ENCODE measurements at regions of chr5 and their contacts with region 1.

Region 1: GRCh38 chr5:31860726-31861433 is 221.9 kb downstream of the PDZD2 start:
- DNase-seq: no peak

Region 2: GRCh38 chr5:31346896-31347551 is 513.9 kb before region 1 on chr5:
- intact Hi-C with region 1: loop called in 1 of 2 experiments (anchors 5 kb)
- DNase-seq: no peak

Region 3: DNA sequence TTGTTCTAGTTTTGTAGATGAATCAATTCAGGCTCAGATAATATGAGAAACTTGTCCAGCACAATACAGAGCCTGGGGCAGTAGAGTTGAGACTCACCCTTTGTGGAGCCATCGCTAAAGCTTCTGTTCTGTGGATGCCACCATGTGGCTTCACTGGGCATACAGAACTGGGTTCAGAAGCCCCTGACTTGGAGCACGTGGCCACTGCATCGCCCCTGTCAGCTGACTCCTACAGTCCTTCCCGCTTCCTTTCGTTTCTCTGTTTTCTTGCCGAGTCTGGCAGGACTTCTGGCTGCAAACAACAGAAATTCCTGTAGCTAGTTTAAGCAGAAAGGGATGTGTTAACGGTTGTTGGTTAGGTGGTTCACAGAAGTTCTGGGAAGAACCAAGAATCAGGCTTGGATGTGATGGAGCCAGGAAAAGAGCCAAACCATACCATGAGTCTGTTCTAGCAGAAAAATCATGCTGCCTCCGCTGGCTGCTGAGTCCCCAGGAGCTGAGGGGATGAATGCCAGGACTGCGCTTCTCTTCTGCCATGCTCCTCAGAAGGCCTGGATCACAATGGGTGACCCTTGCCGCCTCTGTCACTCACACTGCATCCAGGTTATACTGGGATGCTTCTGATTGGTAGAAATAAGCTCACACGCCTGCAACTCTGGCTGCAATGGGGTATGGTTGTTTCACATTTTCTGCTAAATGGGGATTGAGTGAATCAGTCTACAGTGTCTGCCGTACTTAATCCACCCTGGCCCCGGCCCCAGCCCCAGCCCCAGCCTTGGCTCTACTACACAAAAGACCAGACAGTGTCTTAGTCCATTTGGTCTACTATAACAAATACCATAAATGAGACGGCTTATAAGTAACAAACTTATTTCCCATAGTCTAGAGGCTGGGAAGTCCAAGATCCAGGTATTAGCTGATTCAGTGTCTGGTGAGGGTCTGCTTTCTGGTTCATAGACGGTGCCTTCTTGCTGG is 50.7 kb after region 1 on chr5:
- intact Hi-C with region 1: no loop called
- DNase-seq: no peak

Measured in posterior vena cava (tissue), 2 donors.